Right ventricle myocardium superior (tissue), 1 donor: ENCODE measurements at regions of chr22 and their contacts with region 1.

Region 1: DNA sequence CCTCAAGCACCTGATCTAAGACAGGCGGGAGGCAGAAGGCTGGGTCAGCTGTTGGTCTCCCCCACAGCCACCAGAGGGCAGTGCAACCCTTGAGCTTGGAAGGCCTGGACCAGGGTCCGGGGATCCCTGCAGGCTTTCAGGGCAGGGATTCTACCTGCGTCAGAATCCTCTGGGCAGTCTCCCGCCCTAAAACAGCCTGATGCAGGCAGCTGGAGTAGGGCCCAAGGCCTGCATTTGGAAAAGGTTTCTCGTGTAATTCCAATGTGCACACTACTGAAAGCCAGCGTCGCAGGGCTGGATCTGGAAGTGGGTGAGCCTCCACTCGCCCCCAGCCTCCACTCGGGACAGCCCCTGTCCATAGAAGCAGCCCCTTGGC is 31.8 kb downstream of the BID start:
- DNase-seq: peak; percentile 63
- ATAC-seq: peak; percentile 72

Region 2: GRCh38 chr22:17350292-17351065 is 392.0 kb before region 1 on chr22:
- intact Hi-C with region 1: no loop called
- DNase-seq: no peak
- ATAC-seq: no peak

Region 3: DNA sequence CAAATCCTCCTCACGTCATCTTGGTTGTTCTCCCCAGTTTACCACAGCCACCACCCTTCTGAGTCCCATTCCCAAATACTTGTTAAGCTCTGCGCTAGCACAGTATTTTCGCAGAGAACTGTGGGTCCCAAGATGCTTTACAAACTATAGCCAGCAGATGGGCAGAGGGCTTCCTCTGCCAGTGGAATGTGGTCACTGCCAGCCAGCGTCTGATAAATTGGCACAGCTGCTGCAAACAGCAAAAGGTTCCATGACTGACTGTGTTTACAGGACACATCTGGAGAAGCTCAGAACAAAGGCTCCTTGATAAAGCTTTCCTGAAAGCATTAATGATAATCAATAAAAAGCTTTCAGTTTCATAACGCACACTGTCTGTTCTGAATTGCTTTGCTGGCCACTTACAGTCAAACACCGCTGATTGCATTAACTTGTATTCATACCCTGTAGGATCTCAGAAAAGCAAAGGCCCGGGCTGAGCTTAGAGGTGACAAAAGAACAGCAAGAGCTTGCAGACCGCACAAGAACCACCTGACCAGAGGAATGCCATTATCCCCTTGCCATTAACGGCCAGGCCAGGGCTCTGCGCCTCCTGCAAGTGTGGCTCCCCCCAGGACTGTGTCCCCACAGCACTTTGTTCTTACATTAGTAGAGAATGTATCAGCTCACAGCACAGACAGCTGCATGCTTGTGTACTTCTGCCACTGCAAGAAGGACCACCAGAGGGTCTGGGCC is 161.2 kb after region 1 on chr22:
- intact Hi-C with region 1: loop called (anchors 10 kb)
- DNase-seq: no peak
- ATAC-seq: peak; percentile 74